ENCODE measurements at regions of chr13 and their contacts with region 1.

Region 1: DNA sequence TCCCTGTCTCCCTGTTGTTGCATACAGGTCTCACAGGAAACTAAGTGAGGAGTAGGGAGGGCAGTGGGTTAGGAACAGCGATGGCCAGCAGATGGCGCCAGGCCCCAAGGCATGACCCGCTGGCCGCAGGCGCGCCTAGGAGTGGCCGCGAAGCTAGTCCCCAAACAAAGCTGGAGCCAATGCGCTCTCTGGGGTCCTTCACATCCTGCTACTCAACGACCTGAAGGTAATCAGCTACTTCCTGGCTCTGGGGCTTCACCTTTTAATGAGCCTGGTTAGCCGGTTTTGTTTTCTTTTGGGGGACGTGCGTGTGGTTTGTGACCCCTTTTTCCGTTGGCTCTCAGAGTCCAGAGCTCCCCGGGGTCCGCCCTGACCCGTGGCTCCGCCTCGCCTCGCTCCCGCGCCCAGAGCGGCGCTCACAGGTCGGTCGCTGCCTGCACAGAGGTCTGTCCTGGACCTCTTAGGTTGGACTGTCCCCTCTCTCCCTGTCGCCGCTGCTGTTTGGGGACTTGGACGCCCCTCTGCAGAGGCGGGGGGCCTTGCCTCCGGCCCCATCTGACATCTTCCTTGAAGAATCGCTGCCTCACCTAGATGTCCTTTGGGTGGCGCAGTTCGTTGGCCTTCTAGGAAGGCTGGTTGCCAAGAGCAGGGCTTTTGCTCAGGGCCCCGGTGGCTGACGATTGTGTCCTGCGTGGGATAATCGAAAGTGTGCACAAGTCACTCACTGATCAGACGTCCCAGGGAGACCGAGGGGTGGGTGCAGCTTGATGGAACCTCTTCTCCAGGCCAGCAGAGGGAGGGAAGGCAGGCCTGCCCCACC is 62.1 kb upstream of the GTF3A start:
- DNase-seq: peak; percentile 91
- H3K4me3 ChIP-seq: peak overlapping the region; percentile 48
- H3K27ac ChIP-seq: no peak overlapping the region
- H3K4me1 ChIP-seq: no peaks in the 10 kb centered on the region
- H3K27me3 ChIP-seq: no peaks in the 10 kb centered on the region
- CTCF ChIP-seq: peak; percentile 86

Region 2: GRCh38 chr13:26946684-26947343 is 415.5 kb before region 1 on chr13:
- intact Hi-C with region 1: loop called (anchors 2 kb)
- DNase-seq: no peak
- H3K4me3 ChIP-seq: no peak overlapping the region
- H3K27ac ChIP-seq: no peak overlapping the region
- H3K4me1 ChIP-seq: peaks cover 7% of the 10 kb centered on the region
- H3K27me3 ChIP-seq: no peaks in the 10 kb centered on the region
- CTCF ChIP-seq: peak; percentile 67

Region 3: DNA sequence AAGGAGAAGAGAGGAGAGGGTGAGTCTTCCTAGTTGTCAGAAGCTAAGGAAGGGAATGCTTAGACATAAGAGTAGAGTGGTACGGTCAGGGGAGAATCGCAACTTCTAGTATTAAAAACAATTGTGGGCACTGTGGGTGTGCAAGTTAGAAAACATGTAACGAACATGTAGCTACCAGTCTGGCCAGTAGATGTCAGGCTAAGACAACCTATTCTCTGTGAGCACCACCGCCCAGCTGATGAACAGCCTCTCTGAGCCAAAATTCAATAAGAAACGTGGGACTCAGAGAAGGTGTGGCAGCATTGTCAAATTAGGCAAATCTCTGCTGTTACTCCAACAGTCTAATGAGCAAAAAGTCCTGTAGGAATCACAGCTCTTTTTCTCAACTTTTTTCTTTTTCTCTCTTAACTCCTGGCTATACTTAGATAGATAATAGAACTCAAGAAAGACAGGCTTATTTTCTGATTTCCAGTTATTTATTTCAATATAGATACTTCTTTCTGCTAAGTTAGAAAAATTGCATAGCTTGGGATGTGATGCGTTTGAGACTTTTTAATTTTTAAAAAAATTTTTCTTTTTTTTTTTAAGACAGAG is 376.9 kb before region 1 on chr13:
- intact Hi-C with region 1: loop called (anchors 2 kb)
- DNase-seq: peak; percentile 87
- H3K4me3 ChIP-seq: no peak overlapping the region
- H3K27ac ChIP-seq: no peak overlapping the region
- H3K4me1 ChIP-seq: peaks cover 9% of the 10 kb centered on the region
- H3K27me3 ChIP-seq: no peaks in the 10 kb centered on the region
- CTCF ChIP-seq: peak; percentile 52

Region 4: DNA sequence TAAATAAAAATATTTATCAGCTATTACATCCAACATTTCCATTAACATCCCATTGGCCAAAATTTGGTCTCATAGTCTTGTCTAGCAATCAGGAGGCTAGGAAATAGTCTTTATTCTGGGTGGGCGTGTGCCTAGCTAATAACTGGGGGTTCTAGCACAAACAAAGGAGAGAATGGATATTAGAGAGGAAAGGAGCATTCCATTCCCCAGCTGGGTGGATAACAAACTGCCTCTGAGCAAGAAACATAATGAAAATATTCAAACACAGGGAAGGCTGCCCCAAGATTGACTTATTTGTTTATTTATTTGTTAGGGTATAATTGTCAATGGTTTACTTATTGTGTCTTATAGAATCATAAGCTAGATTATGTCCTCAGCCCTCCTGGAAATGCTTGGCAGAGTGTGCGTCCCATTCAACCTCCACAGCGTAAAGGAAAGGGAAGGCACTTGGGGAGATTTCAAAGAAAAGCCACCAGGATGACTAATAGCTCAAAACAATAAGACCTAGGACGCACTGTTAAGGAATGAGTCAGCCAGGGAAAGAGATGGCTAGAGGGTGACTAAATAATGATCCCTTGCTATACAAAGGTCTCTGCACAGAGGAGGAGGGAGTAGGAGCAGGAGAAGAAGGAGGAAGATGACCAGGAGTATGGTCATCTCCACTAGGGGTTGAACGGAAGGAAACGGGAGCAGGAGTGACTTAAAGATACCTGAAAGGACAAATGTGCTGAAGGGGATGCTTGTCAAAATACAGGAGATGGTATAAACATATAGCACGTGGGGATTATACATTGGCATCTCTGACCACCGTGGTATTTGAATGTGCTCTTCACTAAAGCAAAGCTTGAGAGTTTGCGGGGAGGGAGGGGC is 167.1 kb before region 1 on chr13:
- intact Hi-C with region 1: no loop called
- DNase-seq: no peak
- H3K4me3 ChIP-seq: no peak overlapping the region
- H3K27ac ChIP-seq: no peak overlapping the region
- H3K4me1 ChIP-seq: no peaks in the 10 kb centered on the region
- H3K27me3 ChIP-seq: no peaks in the 10 kb centered on the region
- CTCF ChIP-seq: no peak

Region 5: GRCh38 chr13:27826379-27827353 is 464.4 kb after region 1 on chr13:
- intact Hi-C with region 1: loop called (anchors 2 kb)
- DNase-seq: peak; percentile 86
- H3K4me3 ChIP-seq: no peak overlapping the region
- H3K27ac ChIP-seq: no peak overlapping the region
- H3K4me1 ChIP-seq: peaks cover 8% of the 10 kb centered on the region
- H3K27me3 ChIP-seq: peaks cover 25% of the 10 kb centered on the region
- CTCF ChIP-seq: peak; percentile 93

Region 6: GRCh38 chr13:27977476-27978300 is 615.4 kb after region 1 on chr13:
- intact Hi-C with region 1: loop called (anchors 5 kb)
- DNase-seq: peak; percentile 28
- H3K4me3 ChIP-seq: peak overlapping the region; percentile 49
- H3K27ac ChIP-seq: peak overlapping the region; percentile 84
- H3K4me1 ChIP-seq: no peaks in the 10 kb centered on the region
- H3K27me3 ChIP-seq: peaks cover 22% of the 10 kb centered on the region
- CTCF ChIP-seq: no peak

Measured in colonic mucosa (tissue), 4 donors.